Activated CD8-positive, alpha-beta T cell treated with anti-CD3 and anti-CD28 coated beads for 36 hours (primary cell): ENCODE measurements at regions of chr21 and their contacts with region 1.

Region 1: DNA sequence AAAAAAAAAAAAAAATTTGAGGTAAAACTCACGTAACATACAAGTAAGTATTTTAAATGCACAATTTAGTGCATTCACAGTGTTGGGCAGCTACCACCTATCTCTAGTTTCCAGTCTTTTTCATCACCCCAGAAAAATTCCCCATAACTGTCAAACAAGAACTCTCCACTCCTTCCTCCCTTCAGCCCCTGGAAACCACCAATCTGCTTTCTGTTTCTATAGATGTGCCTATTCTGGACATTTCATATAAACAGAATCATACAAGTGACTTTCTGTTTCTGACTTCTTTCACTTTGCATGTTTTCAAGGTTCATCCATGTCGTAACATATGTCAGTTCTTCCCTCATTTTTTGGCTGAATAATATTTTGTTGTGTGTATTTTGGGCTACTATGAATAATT is 24.9 kb upstream of the ETS2 start:
- DNase-seq: peak; percentile 34
- ATAC-seq: peak; percentile 73
- H3K4me3 Mint-ChIP-seq: no peak overlapping the region
- H3K27ac Mint-ChIP-seq: peak overlapping the region; percentile 47
- H3K4me1 Mint-ChIP-seq: peaks cover 41% of the 10 kb centered on the region
- H3K27me3 Mint-ChIP-seq: peaks cover 5% of the 10 kb centered on the region
- CTCF ChIP-seq: no peak

Region 2: GRCh38 chr21:38766987-38767722 is 13.7 kb before region 1 on chr21:
- CTCF ChIA-PET with region 1: interaction called, 5 read pairs
- POLR2A ChIA-PET with region 1: interaction called, 15 read pairs
- intact Hi-C with region 1: no loop called
- DNase-seq: peak; percentile 81
- ATAC-seq: peak; percentile 80
- H3K4me3 Mint-ChIP-seq: peak overlapping the region; percentile 64
- H3K27ac Mint-ChIP-seq: peak overlapping the region; percentile 95
- H3K4me1 Mint-ChIP-seq: peaks cover 40% of the 10 kb centered on the region
- H3K27me3 Mint-ChIP-seq: no peaks in the 10 kb centered on the region
- CTCF ChIP-seq: no peak